ENCODE measurements at regions of chr6 and their contacts with region 1.

Region 1: DNA sequence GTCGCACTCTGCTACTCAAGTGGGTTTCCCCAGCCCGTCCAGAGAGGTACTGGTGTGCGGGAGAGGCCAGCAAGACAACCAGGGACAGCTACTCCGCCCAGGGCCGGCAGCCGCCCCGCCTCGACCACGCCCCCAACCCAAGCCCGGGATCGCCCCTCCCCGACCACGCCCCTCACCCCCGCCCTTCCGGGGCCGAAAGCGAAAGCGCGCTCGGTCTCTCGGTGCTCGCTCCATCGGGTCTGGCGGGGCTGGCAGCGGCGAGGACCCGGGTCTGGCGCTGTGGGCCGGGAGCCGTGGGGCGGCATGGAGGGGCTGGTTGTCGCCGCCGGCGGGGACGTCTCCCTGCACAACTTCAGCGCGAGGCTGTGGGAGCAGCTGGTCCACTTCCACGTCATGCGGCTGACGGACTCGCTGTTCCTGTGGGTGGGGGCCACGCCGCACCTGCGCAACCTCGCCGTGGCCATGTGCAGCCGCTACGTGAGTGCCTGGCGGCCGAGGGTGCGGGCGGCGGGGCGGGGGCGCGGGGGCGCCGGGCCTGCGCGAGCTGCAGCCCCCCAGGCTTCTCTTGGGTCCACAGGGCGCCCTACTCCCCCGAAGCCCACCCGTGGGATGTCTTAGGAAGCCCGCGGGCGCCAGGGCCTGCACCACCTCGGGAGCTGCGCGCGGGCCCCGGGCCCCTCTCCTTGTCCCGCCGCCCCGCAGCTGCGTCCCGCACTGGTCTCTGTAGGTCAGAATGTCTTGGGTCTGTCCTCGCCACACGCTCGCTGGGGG is at the start of gene PSMG4:
- H3K4me3 Mint-ChIP-seq: peak within 1 kb of the TSS; percentile 97
- H3K27ac Mint-ChIP-seq: peak within 1 kb of the TSS; percentile 83
- H3K4me1 Mint-ChIP-seq: peaks cover 38% of the 10 kb centered on the region
- H3K27me3 Mint-ChIP-seq: peaks cover 22% of the 10 kb centered on the region

Region 2: GRCh38 chr6:3162565-3163247 is 96.2 kb before region 1 on chr6:
- intact Hi-C with region 1: loop called (anchors 5 kb)
- H3K4me3 Mint-ChIP-seq: peak overlapping the region; percentile 85
- H3K27ac Mint-ChIP-seq: peak overlapping the region; percentile 83
- H3K4me1 Mint-ChIP-seq: peaks cover 37% of the 10 kb centered on the region
- H3K27me3 Mint-ChIP-seq: peaks cover 46% of the 10 kb centered on the region

Measured in dendritic cell treated with granulocyte-macrophage colony-stimulating factor and Interleukin-4, amounts not matched to agents 40 ng/mL and 50 ng/mL, for 4 days (primary cell).